CD8-positive, alpha-beta T cell (primary cell): ENCODE measurements at regions of chr3 and their contacts with region 1.

Region 1: GRCh38 chr3:100334488-100335351 is at the start of gene NIT2:
- DNase-seq: peak; percentile 54 to 89 (median 78)
- ATAC-seq: peak; percentile 95
- H3K4me3 ChIP-seq: peak within 1 kb of the TSS; percentile 70 to 72
- H3K4me3 Mint-ChIP-seq: peak within 1 kb of the TSS; percentile 99
- H3K27ac ChIP-seq: peak within 1 kb of the TSS; percentile 51 to 71
- H3K27ac Mint-ChIP-seq: peak within 1 kb of the TSS; percentile 93
- H3K4me1 ChIP-seq: peaks cover 9% of the 10 kb centered on the region
- H3K4me1 Mint-ChIP-seq: peaks cover 28% of the 10 kb centered on the region
- H3K27me3 ChIP-seq: no peaks in the 10 kb centered on the region
- H3K27me3 Mint-ChIP-seq: no peaks in the 10 kb centered on the region
- CTCF ChIP-seq: no peak
- total RNA-seq, gene NIT2: 17.2 to 17.7 TPM

Region 2: GRCh38 chr3:100260685-100261484 is 73.8 kb before region 1 on chr3 and contains the start of gene TBC1D23:
- CTCF ChIA-PET with region 1: no interaction called
- POLR2A ChIA-PET with region 1: interaction called, 10 read pairs
- intact Hi-C with region 1: loop called (anchors 2 to 5 kb)
- DNase-seq: peak; percentile 91 to 99 (median 97)
- ATAC-seq: peak; percentile 98
- H3K4me3 ChIP-seq: peak within 1 kb of the TSS; percentile 80 to 90
- H3K4me3 Mint-ChIP-seq: peak within 1 kb of the TSS; percentile 95
- H3K27ac ChIP-seq: peak within 1 kb of the TSS; percentile 91 to 94
- H3K27ac Mint-ChIP-seq: peak within 1 kb of the TSS; percentile 98
- H3K4me1 ChIP-seq: peaks cover 17% of the 10 kb centered on the region
- H3K4me1 Mint-ChIP-seq: peaks cover 60% of the 10 kb centered on the region
- H3K27me3 ChIP-seq: no peaks in the 10 kb centered on the region
- H3K27me3 Mint-ChIP-seq: no peaks in the 10 kb centered on the region
- CTCF ChIP-seq: no peak
- total RNA-seq, gene TBC1D23: 38.9 to 43.9 TPM

Region 3: DNA sequence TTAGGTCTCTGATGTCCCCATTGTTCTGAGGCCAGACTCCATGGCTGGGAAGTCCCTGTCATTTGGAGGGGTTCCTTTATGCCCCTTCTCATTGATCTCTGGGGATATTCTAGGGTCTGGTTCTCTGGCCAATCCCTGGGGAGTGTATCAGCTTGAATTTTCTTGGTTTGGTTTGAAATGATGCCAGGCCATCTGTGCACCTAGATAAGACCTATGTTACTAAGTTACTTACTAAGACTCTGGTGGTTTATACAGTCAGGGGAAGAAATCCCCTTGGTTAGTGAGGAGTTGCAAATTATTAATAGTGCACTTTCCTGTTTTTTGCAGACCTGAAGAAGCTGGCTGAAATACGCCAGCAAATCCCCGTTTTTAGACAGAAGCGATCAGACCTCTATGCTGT is 20.1 kb after region 1 on chr3:
- CTCF ChIA-PET with region 1: no interaction called
- POLR2A ChIA-PET with region 1: no interaction called
- intact Hi-C with region 1: no loop called
- DNase-seq: no peak
- ATAC-seq: no peak
- H3K4me3 ChIP-seq: no peak overlapping the region
- H3K4me3 Mint-ChIP-seq: no peak overlapping the region
- H3K27ac ChIP-seq: no peak overlapping the region
- H3K27ac Mint-ChIP-seq: peak overlapping the region; percentile 25
- H3K4me1 ChIP-seq: no peaks in the 10 kb centered on the region
- H3K4me1 Mint-ChIP-seq: no peaks in the 10 kb centered on the region
- H3K27me3 ChIP-seq: no peaks in the 10 kb centered on the region
- H3K27me3 Mint-ChIP-seq: no peaks in the 10 kb centered on the region
- CTCF ChIP-seq: no peak